ENCODE measurements at regions of chr11 and their contacts with region 1.

Region 1: GRCh38 chr11:121318848-121319834 is 26.6 kb downstream of the SC5D start:
- DNase-seq: peak in 1 of 2 experiments; percentile 2
- H3K4me3 ChIP-seq: no peak overlapping the region
- H3K27ac ChIP-seq: no peak overlapping the region
- H3K4me1 ChIP-seq: no peaks in the 10 kb centered on the region
- H3K27me3 ChIP-seq: peaks cover 58% of the 10 kb centered on the region
- CTCF ChIP-seq: peak; percentile 85

Region 2: DNA sequence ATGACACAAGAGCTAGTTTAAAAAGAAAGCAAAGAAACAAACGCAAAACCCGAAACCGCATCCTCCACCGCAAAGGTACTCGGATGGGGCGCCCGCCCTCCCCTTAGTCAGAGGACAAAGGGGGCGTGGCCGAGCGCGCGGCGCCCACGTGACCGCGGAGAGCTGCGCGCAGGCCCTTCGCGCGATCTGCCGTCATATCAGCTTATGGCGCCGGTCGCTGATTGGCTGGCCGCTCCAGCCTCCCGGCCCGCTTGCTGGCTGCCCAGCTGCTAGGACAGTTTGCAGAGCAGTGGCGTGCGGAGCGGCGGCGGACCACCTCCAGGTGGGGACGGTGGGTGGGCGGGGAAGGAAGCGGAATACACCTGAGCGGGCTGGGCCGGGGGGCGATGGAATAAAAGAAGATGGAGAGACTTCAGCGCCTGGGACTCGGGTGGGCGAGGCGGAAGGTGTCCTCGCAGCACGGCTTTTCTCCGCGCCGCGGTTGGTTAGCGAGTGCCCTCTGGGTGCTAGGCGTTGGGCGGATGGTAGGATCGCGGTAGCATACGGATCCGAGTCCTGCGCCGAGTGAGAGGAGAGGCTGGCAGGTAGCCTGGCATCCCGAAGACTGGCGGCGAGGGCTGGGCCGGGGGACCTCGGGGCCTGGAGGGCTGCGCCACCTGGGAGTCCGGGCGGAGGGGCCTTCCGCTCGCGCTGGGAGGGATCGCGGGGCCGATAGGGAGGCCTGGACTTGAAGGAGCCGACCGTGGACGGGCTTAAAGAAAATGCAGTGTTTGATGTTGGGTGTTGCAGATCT is 26.4 kb before region 1 on chr11 and contains the start of gene SC5D:
- CTCF ChIA-PET with region 1: no interaction called
- POLR2A ChIA-PET with region 1: no interaction called
- intact Hi-C with region 1: loop called (anchors 1 kb)
- DNase-seq: peak; percentile 87 to 91
- H3K4me3 ChIP-seq: peak within 1 kb of the TSS; percentile 90
- H3K27ac ChIP-seq: peak within 1 kb of the TSS; percentile 34
- H3K4me1 ChIP-seq: peaks cover 11% of the 10 kb centered on the region
- H3K27me3 ChIP-seq: peaks cover 31% of the 10 kb centered on the region
- CTCF ChIP-seq: no peak
- total RNA-seq, gene SC5D: 10.2 and 16.9 TPM in 2 replicates

Region 3: DNA sequence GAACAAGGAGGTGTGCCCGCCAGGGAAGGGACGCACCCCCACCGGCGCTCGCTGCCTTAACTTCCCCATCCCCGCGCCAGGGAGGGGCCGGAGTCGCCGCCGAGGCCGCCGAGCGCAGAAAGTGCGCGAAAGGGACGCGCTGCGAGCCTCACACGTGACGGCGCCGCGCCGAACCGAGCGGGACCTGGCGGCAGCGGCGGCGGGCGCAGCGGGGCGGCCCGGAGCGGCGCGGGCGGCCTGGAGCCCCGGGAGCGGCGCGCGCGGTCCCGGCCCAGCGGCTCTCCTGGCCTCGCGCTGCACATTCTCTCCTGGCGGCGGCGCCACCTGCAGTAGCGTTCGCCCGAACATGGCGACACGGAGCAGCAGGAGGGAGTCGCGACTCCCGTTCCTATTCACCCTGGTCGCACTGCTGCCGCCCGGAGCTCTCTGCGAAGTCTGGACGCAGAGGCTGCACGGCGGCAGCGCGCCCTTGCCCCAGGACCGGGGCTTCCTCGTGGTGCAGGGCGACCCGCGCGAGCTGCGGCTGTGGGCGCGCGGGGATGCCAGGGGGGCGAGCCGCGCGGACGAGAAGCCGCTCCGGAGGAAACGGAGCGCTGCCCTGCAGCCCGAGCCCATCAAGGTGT is 133.0 kb after region 1 on chr11 and contains the start of gene SORL1:
- CTCF ChIA-PET with region 1: no interaction called
- POLR2A ChIA-PET with region 1: no interaction called
- intact Hi-C with region 1: loop called (anchors 10 kb)
- DNase-seq: peak in 1 of 2 experiments; percentile 61
- H3K4me3 ChIP-seq: peak within 1 kb of the TSS; percentile 48; the same call in 1 of the 2 replicates
- H3K27ac ChIP-seq: no peak within 1 kb of the TSS
- H3K4me1 ChIP-seq: peaks cover 14% of the 10 kb centered on the region
- H3K27me3 ChIP-seq: no peaks in the 10 kb centered on the region
- CTCF ChIP-seq: peak; percentile 31; the same call in 1 of the 2 replicates
- total RNA-seq, gene SORL1: 4.9 and 6.4 TPM in 2 replicates

Region 4: DNA sequence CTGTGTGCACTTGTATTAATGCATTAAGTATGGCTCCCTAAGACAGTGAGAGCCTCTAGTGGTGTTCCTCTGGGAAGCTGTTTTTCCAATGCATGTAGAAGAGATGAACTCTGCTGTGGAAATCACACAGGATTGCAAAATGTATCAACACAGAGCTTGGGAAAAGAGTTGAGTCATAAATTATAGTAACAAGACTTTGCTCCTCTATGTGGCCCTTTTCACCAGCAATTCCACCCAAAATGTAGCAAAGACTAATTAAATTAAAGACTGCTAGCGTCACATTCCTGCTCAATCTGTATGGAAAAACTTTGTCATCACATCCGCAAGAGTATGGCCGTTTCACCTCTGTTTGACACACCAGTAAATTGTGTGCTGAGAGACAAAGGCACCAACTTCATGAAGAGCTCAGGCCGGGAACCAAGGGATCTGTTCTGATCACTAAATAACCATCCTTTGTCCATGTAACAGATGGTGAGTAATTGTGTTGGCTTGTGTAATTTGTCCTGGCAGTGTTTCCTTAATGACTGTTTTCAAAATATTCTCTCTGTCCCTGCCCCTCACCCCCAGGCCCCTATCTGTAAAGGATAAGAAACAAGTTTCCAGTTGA is 342.8 kb after region 1 on chr11:
- CTCF ChIA-PET with region 1: no interaction called
- POLR2A ChIA-PET with region 1: no interaction called
- intact Hi-C with region 1: no loop called
- DNase-seq: no peak
- H3K4me3 ChIP-seq: no peak overlapping the region
- H3K27ac ChIP-seq: no peak overlapping the region
- H3K4me1 ChIP-seq: no peaks in the 10 kb centered on the region
- H3K27me3 ChIP-seq: 0 out of 2 replicates have a peak, but pooled peaks cover 8% of the 10 kb centered on the region
- CTCF ChIP-seq: no peak

Measured in PC-9 (cell line).